ENCODE measurements at regions of chr7 and their contacts with region 1.

Region 1: DNA sequence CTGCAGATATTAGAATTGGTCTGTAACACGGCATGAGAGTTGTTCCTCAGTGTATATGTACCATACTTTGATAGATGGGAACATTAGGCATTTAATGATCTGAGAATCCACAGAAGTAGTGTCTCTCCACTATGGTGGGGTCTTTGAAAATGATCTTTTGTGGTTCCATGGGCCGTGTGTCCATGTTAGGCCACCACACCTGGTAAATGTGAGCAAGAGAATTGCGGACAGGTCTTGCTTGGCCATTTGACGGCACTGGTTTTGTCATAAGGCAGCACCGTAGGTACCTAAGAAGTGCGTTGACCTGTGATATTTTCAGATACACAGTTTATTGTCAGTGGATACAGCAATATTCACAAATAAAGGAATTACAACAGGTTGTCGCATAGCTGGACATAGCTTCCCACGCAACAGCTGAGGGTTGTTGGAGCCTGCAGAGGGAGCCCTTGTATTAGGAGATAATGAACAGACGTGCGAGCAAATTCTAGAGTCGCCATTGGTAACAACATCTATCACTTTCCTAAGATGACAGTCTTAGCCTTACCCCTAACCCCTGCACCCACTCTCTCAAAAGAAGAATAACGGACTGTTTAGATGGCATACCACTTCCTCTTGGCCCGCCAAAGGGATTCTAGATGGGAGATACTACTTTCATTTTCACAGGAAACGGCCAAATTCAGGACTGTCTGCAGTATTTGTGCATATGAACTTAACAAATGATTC is 111.4 kb downstream of the COL28A1 start:
- DNase-seq: peak; percentile 67
- ATAC-seq: peak; percentile 89
- H3K4me3 ChIP-seq: peak overlapping the region; percentile 72
- H3K27ac ChIP-seq: 0 out of 2 replicates have a peak overlapping the region, but pooled peaks have one; percentile 16
- H3K4me1 ChIP-seq: 0 out of 2 replicates have a peak, but pooled peaks cover under 1% of the 10 kb centered on the region
- H3K27me3 ChIP-seq: no peaks in the 10 kb centered on the region; the same call in 1 of the 2 replicates
- CTCF ChIP-seq: peak; percentile 94
- POLR2A ChIP-seq: peak; percentile 45; the same call in 1 of the 2 replicates
- RAD21 ChIP-seq: peak; percentile 98

Region 2: GRCh38 chr7:7080802-7081201 is 343.5 kb before region 1 on chr7:
- CTCF ChIA-PET with region 1: no interaction called
- POLR2A ChIA-PET with region 1: no interaction called
- dilution Hi-C with region 1: no loop called
- in situ Hi-C with region 1: no loop called
- intact Hi-C with region 1: no loop called
- DNase-seq: no peak
- ATAC-seq: no peak
- H3K4me3 ChIP-seq: no peak overlapping the region
- H3K27ac ChIP-seq: no peak overlapping the region
- H3K4me1 ChIP-seq: no peaks in the 10 kb centered on the region
- H3K27me3 ChIP-seq: no peaks in the 10 kb centered on the region
- CTCF ChIP-seq: no peak
- POLR2A ChIP-seq: no peak
- RAD21 ChIP-seq: no peak

Region 3: DNA sequence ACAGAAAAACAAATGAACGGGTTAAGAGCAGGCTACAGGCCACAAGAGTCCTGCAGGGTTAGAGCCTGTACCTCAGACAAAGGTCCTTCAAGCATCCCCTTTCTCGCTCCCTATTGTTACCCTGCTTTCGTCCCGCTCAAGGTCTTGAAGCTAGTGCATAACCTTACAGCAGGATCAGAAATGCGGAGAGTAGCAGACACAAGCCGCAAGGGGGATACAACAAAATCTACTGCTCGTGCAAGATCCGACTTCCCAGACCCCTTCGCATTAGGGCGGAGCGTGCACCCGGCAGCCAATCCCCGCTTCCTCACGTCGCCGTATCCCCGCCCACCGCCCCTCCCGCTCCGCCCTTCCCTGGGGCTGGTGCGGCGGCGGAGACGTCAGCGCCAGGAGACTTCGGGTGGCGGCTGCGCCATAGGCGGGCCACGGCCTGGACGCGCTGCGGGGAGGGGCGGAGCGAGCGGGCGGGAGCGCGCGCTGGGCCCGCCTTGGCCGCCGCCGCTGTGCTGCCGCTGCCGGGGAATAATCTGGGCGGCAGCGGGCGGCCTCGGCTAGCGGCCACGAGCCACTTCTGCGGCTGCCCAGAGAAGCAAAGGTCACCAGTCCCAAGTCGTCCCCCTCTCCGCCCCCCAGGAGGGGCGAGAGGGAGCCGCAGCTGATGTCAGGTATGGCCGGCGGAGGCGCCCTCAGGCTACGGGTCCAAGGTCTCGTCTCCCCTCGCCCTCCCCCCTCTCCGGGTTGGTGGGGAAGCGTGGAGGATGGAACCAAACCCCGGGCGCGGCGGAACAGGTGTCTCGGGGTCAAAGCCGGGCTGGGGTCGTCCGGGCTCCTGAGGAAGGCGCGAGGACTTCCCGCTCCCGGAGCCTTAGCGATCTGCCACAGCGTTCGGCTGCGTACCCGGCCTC is 241.9 kb before region 1 on chr7 and contains the start of gene C1GALT1:
- CTCF ChIA-PET with region 1: interaction called, 3 read pairs
- POLR2A ChIA-PET with region 1: no interaction called
- dilution Hi-C with region 1: no loop called
- in situ Hi-C with region 1: no loop called
- intact Hi-C with region 1: loop called (anchors 2 kb)
- DNase-seq: peak; percentile 97
- ATAC-seq: peak; percentile 97
- H3K4me3 ChIP-seq: peak within 1 kb of the TSS; percentile 77
- H3K27ac ChIP-seq: peak within 1 kb of the TSS; percentile 72
- H3K4me1 ChIP-seq: peaks cover 3% of the 10 kb centered on the region; the same call in 1 of the 2 replicates
- H3K27me3 ChIP-seq: no peaks in the 10 kb centered on the region
- CTCF ChIP-seq: peak; percentile 56
- POLR2A ChIP-seq: peak; percentile 77
- RAD21 ChIP-seq: peak; percentile 43
- total RNA-seq, gene C1GALT1: 12.2 and 23.1 TPM in 2 replicates

Region 4: GRCh38 chr7:7535691-7536090 is 111.4 kb after region 1 on chr7 and contains the start of gene COL28A1:
- CTCF ChIA-PET with region 1: interaction called, 4 read pairs
- POLR2A ChIA-PET with region 1: no interaction called
- dilution Hi-C with region 1: no loop called
- in situ Hi-C with region 1: loop called (anchors 5 kb)
- intact Hi-C with region 1: loop called (anchors 1 kb)
- DNase-seq: no peak
- ATAC-seq: no peak
- H3K4me3 ChIP-seq: no peak within 1 kb of the TSS
- H3K27ac ChIP-seq: no peak within 1 kb of the TSS
- H3K4me1 ChIP-seq: no peaks in the 10 kb centered on the region
- H3K27me3 ChIP-seq: no peaks in the 10 kb centered on the region
- CTCF ChIP-seq: no peak
- POLR2A ChIP-seq: no peak
- RAD21 ChIP-seq: no peak
- total RNA-seq, gene COL28A1: under 0.01 TPM in 2 replicates

Region 5: DNA sequence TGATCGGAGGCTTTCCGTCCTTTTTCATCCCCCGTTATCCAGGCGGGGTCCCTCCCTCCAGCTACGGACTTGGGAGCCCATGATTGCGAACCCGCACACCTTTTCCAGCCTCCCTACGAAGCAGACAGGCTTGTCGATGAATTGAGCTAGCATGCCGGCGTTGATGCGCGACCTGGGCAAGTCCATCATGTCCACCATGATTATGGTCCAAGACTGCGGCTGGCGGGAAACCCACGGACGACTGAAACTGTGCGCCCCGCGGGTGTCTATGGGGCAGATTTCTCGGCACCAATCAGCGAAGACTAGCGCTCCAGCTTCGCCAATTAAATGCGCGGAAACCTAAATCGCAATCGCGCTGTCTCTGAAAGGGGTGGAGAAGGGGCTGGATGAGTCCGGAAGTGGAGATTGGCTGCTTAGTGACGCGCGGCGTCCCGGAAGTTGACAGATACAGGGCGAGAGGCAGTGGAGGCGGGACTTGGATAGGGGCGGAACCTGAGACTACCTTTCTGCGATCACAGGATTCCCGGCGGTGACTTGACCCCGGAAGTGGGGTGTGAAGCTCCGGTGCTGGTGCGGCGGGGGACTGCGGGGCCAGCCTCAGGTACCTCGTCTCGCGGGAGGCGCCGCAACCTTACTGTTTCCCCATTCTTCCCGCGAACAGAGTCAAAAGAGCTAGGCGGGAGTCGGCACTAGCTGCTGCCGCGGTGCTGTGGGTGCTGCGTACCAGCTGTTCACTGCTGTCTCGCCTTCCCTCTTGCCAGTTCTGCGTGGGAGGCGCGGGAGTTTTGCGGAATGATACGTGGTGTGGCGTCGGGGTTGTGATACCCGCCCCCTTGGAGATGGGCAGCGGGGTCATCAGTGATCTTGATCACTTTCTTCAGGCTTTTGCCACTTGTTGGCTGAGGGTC is 216.2 kb after region 1 on chr7 and contains the start of gene UMAD1:
- CTCF ChIA-PET with region 1: no interaction called
- POLR2A ChIA-PET with region 1: no interaction called
- dilution Hi-C with region 1: no loop called
- in situ Hi-C with region 1: no loop called
- intact Hi-C with region 1: loop called (anchors 5 kb)
- DNase-seq: peak; percentile 98
- ATAC-seq: peak; percentile 97
- H3K4me3 ChIP-seq: peak within 1 kb of the TSS; percentile 78
- H3K27ac ChIP-seq: peak within 1 kb of the TSS; percentile 58
- H3K4me1 ChIP-seq: no peaks in the 10 kb centered on the region
- H3K27me3 ChIP-seq: no peaks in the 10 kb centered on the region
- CTCF ChIP-seq: no peak
- POLR2A ChIP-seq: peak; percentile 79; the same call in 1 of the 2 replicates
- RAD21 ChIP-seq: no peak
- total RNA-seq, gene UMAD1: 5.2 and 9.2 TPM in 2 replicates

Region 6: GRCh38 chr7:8217200-8218068 is 793.1 kb after region 1 on chr7:
- CTCF ChIA-PET with region 1: interaction called, 3 read pairs
- POLR2A ChIA-PET with region 1: no interaction called
- dilution Hi-C with region 1: no loop called
- in situ Hi-C with region 1: loop called (anchors 10 kb)
- intact Hi-C with region 1: loop called (anchors 2 kb)
- DNase-seq: peak; percentile 73
- ATAC-seq: peak; percentile 83
- H3K4me3 ChIP-seq: no peak overlapping the region
- H3K27ac ChIP-seq: no peak overlapping the region
- H3K4me1 ChIP-seq: no peaks in the 10 kb centered on the region
- H3K27me3 ChIP-seq: no peaks in the 10 kb centered on the region
- CTCF ChIP-seq: peak; percentile 70
- POLR2A ChIP-seq: no peak
- RAD21 ChIP-seq: peak; percentile 70